BJ (cell line): ENCODE measurements at regions of chr1 and their contacts with region 1.

Region 1: DNA sequence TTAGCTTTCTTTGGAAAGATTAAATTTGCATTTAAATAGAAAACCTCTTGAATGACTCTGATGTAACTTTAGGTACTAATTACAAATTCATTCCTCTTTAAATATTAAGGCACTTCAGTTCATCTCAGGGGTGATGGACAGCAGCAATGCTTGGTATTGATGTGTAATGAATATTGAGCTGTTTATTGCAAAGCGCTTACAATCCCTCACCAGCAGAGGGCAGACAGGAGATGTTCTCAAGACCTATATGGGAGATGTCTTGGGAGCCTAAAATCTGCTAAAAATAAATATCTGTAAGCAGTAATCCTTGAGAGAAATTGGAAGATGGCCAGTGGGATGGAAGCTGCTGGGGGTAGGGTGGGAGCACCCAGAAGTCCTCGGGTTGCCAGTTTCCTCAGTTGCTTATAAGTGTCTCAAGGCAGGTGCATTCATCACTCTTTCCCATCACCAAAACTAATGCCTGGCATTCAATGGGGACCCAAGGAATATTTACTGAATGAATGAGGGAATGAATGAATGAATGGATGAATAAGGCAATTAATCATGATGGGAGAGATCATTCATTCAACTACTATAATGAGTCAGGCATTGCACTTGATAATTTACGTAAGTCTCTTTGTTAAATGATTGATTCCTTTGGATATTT is 2.3 kb downstream of the KLHDC8A start:
- DNase-seq: no peak
- H3K4me3 ChIP-seq: no peak overlapping the region
- H3K27me3 ChIP-seq: peaks cover 29% of the 10 kb centered on the region
- CTCF ChIP-seq: peak; percentile 88

Region 2: GRCh38 chr1:205321164-205321958 is 33.0 kb before region 1 on chr1 and contains the start of gene NUAK2:
- CTCF ChIA-PET with region 1: interaction called, 10 read pairs
- POLR2A ChIA-PET with region 1: no interaction called
- DNase-seq: no peak
- H3K4me3 ChIP-seq: peak within 1 kb of the TSS; percentile 84
- H3K27me3 ChIP-seq: no peaks in the 10 kb centered on the region; the same call in 1 of the 2 replicates
- CTCF ChIP-seq: peak; percentile 37; the same call in 1 of the 2 replicates
- polyA plus RNA-seq, gene NUAK2: 3.4 and 5.8 TPM in 2 replicates

Region 3: DNA sequence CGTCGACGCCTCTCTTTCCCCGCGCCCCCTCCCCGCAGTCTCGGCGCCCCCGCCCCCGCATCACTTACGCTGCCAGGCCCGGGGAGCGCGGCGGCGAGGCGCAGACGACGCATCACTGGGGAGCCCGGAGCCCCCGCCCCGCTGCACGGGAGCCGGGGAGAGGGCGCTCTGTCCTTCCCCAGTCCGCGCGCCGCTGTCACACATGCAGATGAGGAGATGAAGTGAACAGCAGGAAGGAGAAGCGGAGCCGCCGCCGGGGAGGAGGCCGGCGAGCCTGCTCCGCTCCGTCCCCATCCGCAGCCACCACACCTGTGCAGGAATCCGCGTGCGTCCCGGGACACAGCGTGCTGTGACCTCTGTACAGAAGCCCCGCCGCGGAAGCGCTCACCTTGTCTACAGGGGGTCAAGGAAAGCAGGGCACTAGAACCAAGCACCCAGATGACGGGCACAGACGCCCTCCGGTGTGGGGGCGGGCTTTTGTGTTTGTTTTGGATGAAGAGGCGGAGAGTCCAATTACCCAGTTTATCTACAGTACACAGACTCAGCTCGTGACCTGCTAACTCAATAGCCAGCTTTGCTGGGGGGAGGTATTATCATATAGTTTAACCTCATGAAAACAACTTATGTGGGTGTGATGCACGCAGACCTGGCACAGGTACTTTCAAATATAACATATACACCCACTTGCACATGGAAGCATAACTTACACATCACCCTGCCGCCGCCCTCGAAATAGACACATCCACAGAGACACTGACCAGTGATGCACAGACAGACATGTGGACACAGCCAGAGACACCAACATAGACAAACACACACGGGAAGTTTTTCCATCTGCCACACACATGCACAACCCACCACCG is 10.1 kb before region 1 on chr1:
- CTCF ChIA-PET with region 1: interaction called, 11 read pairs
- POLR2A ChIA-PET with region 1: no interaction called
- DNase-seq: no peak
- H3K4me3 ChIP-seq: peak overlapping the region; percentile 14
- H3K27me3 ChIP-seq: peaks cover 51% of the 10 kb centered on the region
- CTCF ChIP-seq: no peak

Region 4: DNA sequence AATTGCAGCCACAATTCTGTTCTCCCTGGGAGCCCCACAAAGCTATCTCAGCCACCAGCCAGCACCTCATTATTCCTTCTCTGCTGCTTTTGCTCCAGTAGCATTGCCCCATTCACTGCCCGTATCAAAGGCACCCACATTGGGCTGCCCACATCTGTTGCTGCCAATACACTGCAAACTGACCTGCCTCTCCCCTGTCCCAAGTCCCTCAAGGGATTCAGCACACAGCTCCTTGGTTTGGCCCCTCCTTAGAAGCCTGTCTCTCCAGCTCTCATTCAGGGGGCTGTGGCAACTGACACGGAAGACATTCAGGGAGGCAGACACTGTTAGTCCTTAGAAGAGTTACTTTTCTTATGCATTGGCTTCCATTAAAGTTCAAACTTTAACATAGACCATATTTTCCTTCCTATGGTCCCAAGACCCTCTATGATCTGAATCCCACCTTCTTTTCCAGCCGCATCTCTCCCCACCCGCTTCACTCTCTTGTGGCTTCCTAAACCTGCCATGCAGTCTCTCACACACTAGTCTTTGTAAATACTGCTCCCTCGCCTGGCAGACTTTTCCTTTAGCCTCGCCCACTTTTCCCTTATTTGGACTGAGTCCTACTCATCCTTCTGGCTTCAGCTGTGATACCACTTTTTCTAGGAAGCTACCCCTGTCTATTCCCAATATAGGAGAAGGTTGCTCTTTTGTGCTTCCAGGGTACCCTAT is 21.6 kb after region 1 on chr1:
- CTCF ChIA-PET with region 1: interaction called, 19 read pairs
- POLR2A ChIA-PET with region 1: no interaction called
- DNase-seq: peak; percentile 10
- H3K4me3 ChIP-seq: no peak overlapping the region
- H3K27me3 ChIP-seq: peaks cover 3% of the 10 kb centered on the region; the same call in 1 of the 2 replicates
- CTCF ChIP-seq: 0 out of 2 replicates have a peak, but pooled peaks have one; percentile 3

Region 5: DNA sequence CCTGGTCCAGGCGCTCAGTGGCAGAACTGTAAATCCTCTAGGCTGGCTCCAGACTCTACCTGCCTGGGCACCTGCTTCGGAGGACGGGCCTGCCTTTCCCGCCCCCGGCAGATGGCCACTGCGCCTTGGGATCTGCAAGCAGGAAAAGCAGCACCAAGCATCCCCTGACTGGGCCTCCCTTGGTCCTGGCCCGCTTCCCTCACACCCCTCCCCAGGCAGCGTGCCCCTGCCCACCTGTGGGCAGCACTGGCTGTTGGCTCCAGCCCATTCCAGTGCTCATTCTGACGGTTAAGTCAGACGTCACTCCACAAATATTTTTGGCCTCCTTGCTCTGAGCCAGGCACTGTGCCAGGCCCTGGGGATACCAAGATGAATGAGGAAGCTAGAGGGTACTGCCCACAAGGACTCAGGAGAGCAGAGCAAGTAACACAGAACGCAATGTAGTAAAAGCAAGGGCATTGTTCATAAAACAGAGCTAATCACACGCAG is 123.4 kb after region 1 on chr1:
- CTCF ChIA-PET with region 1: interaction called, 119 read pairs
- POLR2A ChIA-PET with region 1: no interaction called
- DNase-seq: peak; percentile 39
- H3K4me3 ChIP-seq: no peak overlapping the region
- H3K27me3 ChIP-seq: peaks cover 18% of the 10 kb centered on the region
- CTCF ChIP-seq: no peak